ENCODE measurements at regions of chr1 and their contacts with region 1.

Region 1: GRCh38 chr1:26145041-26145959 is 13.6 kb upstream of the FAM110D start:
- DNase-seq: peak in 8 of 9 experiments; percentile 62 to 88 (median 81)
- ATAC-seq: peak; percentile 95
- H3K4me3 ChIP-seq: no peak overlapping the region
- H3K4me3 Mint-ChIP-seq: no peak overlapping the region
- H3K27ac ChIP-seq: no peak overlapping the region
- H3K27ac Mint-ChIP-seq: no peak overlapping the region
- H3K4me1 ChIP-seq: peaks cover 6% of the 10 kb centered on the region
- H3K4me1 Mint-ChIP-seq: peaks cover 5% of the 10 kb centered on the region
- H3K27me3 ChIP-seq: no peaks in the 10 kb centered on the region
- H3K27me3 Mint-ChIP-seq: no peaks in the 10 kb centered on the region
- CTCF ChIP-seq: peak; percentile 87

Region 2: GRCh38 chr1:26102526-26102925 is 42.8 kb before region 1 on chr1:
- CTCF ChIA-PET with region 1: interaction called, 289 read pairs
- POLR2A ChIA-PET with region 1: interaction called, 8 read pairs
- intact Hi-C with region 1: loop called (anchors 1 kb)
- DNase-seq: no peak
- ATAC-seq: no peak
- H3K4me3 ChIP-seq: no peak overlapping the region
- H3K4me3 Mint-ChIP-seq: no peak overlapping the region
- H3K27ac ChIP-seq: no peak overlapping the region
- H3K27ac Mint-ChIP-seq: no peak overlapping the region
- H3K4me1 ChIP-seq: no peaks in the 10 kb centered on the region
- H3K4me1 Mint-ChIP-seq: peaks cover 3% of the 10 kb centered on the region
- H3K27me3 ChIP-seq: peaks cover 0 to 3% of the 10 kb centered on the region in 2 experiments
- H3K27me3 Mint-ChIP-seq: peaks cover 3% of the 10 kb centered on the region
- CTCF ChIP-seq: no peak

Region 3: DNA sequence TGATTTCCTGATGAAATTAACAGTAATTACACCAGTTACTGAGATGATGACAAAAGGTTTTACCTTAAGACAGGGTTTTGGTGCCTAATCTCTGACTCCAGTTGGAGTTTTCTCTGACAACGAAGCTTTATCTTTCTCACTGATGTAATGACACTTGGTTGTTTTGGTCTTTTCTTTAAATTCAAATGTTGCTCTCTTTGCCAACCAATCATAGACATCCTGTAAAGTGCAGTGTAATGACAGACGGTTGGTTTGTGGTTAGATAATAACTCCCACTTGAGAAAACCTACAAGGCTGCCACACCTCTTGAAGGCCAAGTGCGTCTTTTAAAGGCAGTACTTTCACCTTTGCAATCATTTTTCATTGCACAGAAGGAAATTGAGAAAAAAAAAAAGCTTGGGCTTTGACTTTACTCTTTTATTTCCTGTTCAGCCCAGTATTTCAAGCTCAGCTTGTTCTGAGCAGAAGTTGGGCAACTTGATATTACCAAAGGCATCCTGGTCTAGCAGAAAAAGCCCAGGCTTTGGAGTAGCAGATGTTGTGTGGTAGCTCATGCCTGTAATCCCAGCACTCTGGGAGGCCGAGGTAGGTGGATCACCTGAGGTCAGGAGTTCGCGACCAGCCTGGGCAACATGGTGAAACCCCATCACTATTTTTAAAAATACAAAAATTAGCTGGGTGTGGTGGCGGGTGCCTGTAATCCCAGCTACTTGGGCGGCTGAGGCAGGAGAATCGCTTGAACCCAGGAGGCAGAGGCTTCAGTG is 18.8 kb before region 1 on chr1:
- CTCF ChIA-PET with region 1: interaction called, 110 read pairs
- POLR2A ChIA-PET with region 1: interaction called, 12 read pairs
- intact Hi-C with region 1: loop called (anchors 1 to 2 kb)
- DNase-seq: peak; percentile 18 to 94 (median 58)
- ATAC-seq: peak; percentile 98
- H3K4me3 ChIP-seq: peak overlapping the region in 1 of 2 experiments; percentile 12
- H3K4me3 Mint-ChIP-seq: peak overlapping the region; percentile 54
- H3K27ac ChIP-seq: peak overlapping the region; percentile 16 to 21
- H3K27ac Mint-ChIP-seq: peak overlapping the region; percentile 88
- H3K4me1 ChIP-seq: peaks cover 26% of the 10 kb centered on the region
- H3K4me1 Mint-ChIP-seq: peaks cover 40% of the 10 kb centered on the region
- H3K27me3 ChIP-seq: peaks cover 0 to 7% of the 10 kb centered on the region in 2 experiments
- H3K27me3 Mint-ChIP-seq: no peaks in the 10 kb centered on the region
- CTCF ChIP-seq: no peak

Region 4: GRCh38 chr1:26156704-26157038 is 11.4 kb after region 1 on chr1:
- CTCF ChIA-PET with region 1: interaction called, 36 read pairs
- POLR2A ChIA-PET with region 1: no interaction called
- intact Hi-C with region 1: no loop called
- DNase-seq: peak in 1 of 9 experiments; percentile 37
- ATAC-seq: peak; percentile 38
- H3K4me3 ChIP-seq: no peak overlapping the region
- H3K4me3 Mint-ChIP-seq: no peak overlapping the region
- H3K27ac ChIP-seq: no peak overlapping the region
- H3K27ac Mint-ChIP-seq: no peak overlapping the region
- H3K4me1 ChIP-seq: peaks cover 12% of the 10 kb centered on the region
- H3K4me1 Mint-ChIP-seq: peaks cover 4% of the 10 kb centered on the region
- H3K27me3 ChIP-seq: peaks cover 7 to 18% of the 10 kb centered on the region in 2 experiments
- H3K27me3 Mint-ChIP-seq: peaks cover 27% of the 10 kb centered on the region
- CTCF ChIP-seq: no peak

Region 5: GRCh38 chr1:26164036-26164860 is 18.9 kb after region 1 on chr1:
- CTCF ChIA-PET with region 1: interaction called, 10 read pairs
- POLR2A ChIA-PET with region 1: no interaction called
- intact Hi-C with region 1: loop called in 1 of 2 experiments (anchors 1 kb)
- DNase-seq: peak in 8 of 9 experiments; percentile 28 to 76 (median 50)
- ATAC-seq: peak; percentile 76
- H3K4me3 ChIP-seq: peak overlapping the region in 1 of 2 experiments; percentile 50
- H3K4me3 Mint-ChIP-seq: peak overlapping the region; percentile 61
- H3K27ac ChIP-seq: no peak overlapping the region
- H3K27ac Mint-ChIP-seq: no peak overlapping the region
- H3K4me1 ChIP-seq: peaks cover 18% of the 10 kb centered on the region
- H3K4me1 Mint-ChIP-seq: peaks cover 10% of the 10 kb centered on the region
- H3K27me3 ChIP-seq: peaks cover 14 to 18% of the 10 kb centered on the region in 2 experiments
- H3K27me3 Mint-ChIP-seq: peaks cover 17% of the 10 kb centered on the region
- CTCF ChIP-seq: peak; percentile 84

Region 6: DNA sequence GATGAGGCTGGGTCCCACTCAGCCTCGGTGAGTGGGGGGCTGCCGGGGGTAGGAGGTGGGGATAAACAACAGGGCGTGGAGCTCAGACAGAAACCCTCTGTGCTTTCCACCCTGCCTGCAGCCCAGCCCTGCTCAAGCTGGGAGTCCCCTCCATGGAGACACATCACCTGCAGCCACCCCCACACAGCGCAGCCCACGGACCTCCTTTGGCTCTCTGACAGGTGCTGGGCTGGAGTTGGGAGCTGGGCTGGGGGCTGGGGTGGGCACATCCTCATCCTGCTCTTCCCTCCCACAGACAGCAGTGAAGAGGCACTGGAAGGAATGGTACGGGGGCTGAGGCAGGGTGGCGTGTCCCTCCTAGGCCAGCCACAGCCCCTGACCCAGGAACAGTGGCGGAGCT is 43.2 kb after region 1 on chr1:
- CTCF ChIA-PET with region 1: no interaction called
- POLR2A ChIA-PET with region 1: no interaction called
- intact Hi-C with region 1: no loop called
- DNase-seq: no peak
- ATAC-seq: no peak
- H3K4me3 ChIP-seq: no peak overlapping the region
- H3K4me3 Mint-ChIP-seq: no peak overlapping the region
- H3K27ac ChIP-seq: no peak overlapping the region
- H3K27ac Mint-ChIP-seq: no peak overlapping the region
- H3K4me1 ChIP-seq: no peaks in the 10 kb centered on the region
- H3K4me1 Mint-ChIP-seq: peaks cover 5% of the 10 kb centered on the region
- H3K27me3 ChIP-seq: no peaks in the 10 kb centered on the region
- H3K27me3 Mint-ChIP-seq: no peaks in the 10 kb centered on the region
- CTCF ChIP-seq: no peak

Region 7: DNA sequence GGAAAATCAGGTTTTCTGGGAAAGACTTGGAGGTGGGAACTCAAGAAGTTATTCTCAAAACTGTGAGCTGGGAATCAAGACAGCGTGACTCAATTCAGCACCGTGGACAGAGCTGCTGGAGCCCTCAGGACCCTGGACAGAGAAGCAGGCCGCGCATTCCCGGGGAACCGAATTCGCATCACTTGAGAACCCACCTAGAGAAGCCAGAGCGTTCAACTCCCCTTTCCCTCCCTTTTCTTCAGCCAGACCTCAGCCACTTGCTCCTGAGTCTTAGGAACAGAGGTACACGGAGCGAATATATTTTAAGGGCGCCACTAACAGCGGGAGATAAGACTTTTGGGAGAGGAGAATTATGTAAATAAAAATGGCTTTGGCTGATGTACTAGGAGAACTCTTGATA is 263.3 kb after region 1 on chr1:
- CTCF ChIA-PET with region 1: no interaction called
- POLR2A ChIA-PET with region 1: no interaction called
- intact Hi-C with region 1: no loop called
- DNase-seq: peak; percentile 65 to 87 (median 81)
- ATAC-seq: peak; percentile 99
- H3K4me3 ChIP-seq: no peak overlapping the region
- H3K4me3 Mint-ChIP-seq: peak overlapping the region; percentile 62
- H3K27ac ChIP-seq: no peak overlapping the region
- H3K27ac Mint-ChIP-seq: no peak overlapping the region
- H3K4me1 ChIP-seq: peaks cover 17% of the 10 kb centered on the region
- H3K4me1 Mint-ChIP-seq: peaks cover 22% of the 10 kb centered on the region
- H3K27me3 ChIP-seq: peaks cover 26 to 42% of the 10 kb centered on the region in 2 experiments
- H3K27me3 Mint-ChIP-seq: peaks cover 54% of the 10 kb centered on the region
- CTCF ChIP-seq: no peak

Region 8: DNA sequence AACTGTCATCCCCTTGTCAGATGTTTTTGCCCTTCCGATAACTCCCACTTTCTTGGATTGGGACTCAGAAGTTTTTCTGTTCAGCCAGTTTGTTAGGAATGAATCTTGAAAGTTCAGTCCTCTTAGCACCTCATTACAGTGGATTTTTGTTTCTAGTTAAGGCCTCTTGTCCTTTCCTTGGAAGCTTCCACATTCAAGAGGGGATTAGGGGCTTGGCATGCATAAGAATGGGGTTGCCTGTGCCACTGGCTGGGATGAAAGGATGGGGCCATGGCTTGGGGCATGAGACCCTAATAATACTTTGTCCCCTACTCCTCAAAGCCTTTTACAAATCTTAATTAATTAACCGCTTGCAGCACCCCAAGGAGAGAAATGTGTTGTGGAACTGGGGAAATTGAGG is 284.4 kb after region 1 on chr1:
- CTCF ChIA-PET with region 1: no interaction called
- POLR2A ChIA-PET with region 1: no interaction called
- intact Hi-C with region 1: no loop called
- DNase-seq: no peak
- ATAC-seq: no peak
- H3K4me3 ChIP-seq: no peak overlapping the region
- H3K4me3 Mint-ChIP-seq: no peak overlapping the region
- H3K27ac ChIP-seq: no peak overlapping the region
- H3K27ac Mint-ChIP-seq: no peak overlapping the region
- H3K4me1 ChIP-seq: peaks cover 20% of the 10 kb centered on the region
- H3K4me1 Mint-ChIP-seq: peaks cover 21% of the 10 kb centered on the region
- H3K27me3 ChIP-seq: no peaks in the 10 kb centered on the region
- H3K27me3 Mint-ChIP-seq: peaks cover 7% of the 10 kb centered on the region
- CTCF ChIP-seq: no peak